ENCODE measurements at regions of chr6 and their contacts with region 1.

Region 1: DNA sequence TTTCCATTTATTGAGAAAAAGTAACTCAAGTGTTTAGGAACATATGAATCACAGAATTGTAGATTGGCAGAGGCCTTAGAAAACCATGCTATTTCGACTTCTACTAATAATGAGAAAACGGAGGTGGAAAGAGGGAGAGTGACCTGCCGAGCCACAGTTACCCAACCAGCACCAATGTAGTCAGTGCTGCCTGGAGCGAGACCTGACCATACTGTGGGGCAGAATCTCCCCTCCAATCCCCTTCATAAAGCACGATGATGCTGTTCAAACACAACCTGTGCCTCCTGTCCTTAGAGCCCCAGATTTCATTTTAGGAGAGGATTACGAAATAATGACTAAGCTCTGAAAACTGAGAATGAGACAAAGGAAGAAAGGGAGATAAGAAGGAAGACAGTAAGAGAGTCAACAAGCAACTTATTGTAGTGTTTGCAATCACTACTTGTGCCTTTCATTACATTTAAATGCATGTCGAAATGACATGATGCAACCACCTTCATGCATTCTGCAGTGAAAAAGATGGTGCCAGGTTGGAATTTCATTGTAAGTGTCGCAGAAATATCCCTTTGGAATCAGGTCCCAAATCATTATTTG is 70.6 kb downstream of the ATXN1 start:
- DNase-seq: no peak
- H3K4me3 Mint-ChIP-seq: peak overlapping the region; percentile 70
- H3K27ac Mint-ChIP-seq: peak overlapping the region; percentile 98
- H3K4me1 Mint-ChIP-seq: peaks cover 90% of the 10 kb centered on the region
- H3K27me3 Mint-ChIP-seq: no peaks in the 10 kb centered on the region

Region 2: GRCh38 chr6:16481697-16482399 is 208.9 kb before region 1 on chr6:
- intact Hi-C with region 1: loop called (anchors 2 kb)
- DNase-seq: peak; percentile 74
- H3K4me3 Mint-ChIP-seq: peak overlapping the region; percentile 56
- H3K27ac Mint-ChIP-seq: peak overlapping the region; percentile 97
- H3K4me1 Mint-ChIP-seq: peaks cover 89% of the 10 kb centered on the region
- H3K27me3 Mint-ChIP-seq: no peaks in the 10 kb centered on the region

Region 3: DNA sequence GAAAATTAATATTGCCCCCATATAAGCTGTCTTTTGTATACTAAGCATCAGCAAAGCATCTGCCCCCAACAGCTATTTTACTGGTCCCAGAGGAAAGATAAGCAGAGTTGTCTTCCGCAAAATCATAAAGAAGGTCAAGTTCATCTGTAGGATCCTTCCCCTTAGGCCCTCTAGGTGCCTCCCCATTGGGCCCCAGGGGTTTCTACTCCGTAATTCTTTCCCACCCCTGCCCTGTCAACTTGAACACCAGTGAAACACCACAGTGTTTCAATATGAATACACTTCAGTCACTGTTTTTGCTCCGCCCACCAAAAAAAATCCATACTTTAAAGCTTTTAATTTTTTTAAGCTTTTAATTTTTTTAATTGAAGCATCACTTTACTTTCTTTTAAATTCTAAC is 88.7 kb before region 1 on chr6:
- intact Hi-C with region 1: loop called (anchors 1 kb)
- DNase-seq: no peak
- H3K4me3 Mint-ChIP-seq: peak overlapping the region; percentile 28
- H3K27ac Mint-ChIP-seq: peak overlapping the region; percentile 75
- H3K4me1 Mint-ChIP-seq: peaks cover 49% of the 10 kb centered on the region
- H3K27me3 Mint-ChIP-seq: no peaks in the 10 kb centered on the region

Region 4: DNA sequence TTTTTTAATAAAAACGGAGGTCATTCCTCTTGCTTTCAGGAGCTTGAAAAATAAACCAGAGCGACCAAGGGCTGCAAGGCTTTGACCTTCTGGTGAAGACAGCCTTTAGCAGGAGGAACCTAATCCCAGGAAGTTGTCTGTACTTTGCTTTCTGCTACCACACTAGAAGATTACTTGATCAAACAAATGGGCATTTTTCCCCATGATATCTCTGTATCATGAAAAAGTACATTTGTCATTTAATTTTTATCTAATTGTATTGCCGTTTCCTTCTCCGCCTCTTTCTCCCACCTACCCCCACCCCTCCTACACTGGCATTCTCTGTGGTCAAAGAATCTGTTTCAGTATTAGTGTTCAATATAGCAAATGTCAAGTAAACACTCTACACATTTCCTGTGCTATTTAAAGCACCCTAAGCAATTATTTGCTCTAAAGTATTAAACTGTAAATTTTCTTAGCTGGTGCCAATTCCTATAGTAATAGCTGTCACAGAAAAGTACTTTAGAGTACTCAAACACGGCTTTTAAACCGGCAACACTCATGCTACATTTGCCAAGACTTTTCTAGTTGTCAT is 40.9 kb after region 1 on chr6:
- intact Hi-C with region 1: loop called (anchors 1 kb)
- DNase-seq: peak; percentile 36
- H3K4me3 Mint-ChIP-seq: peak overlapping the region; percentile 51
- H3K27ac Mint-ChIP-seq: peak overlapping the region; percentile 89
- H3K4me1 Mint-ChIP-seq: peaks cover 71% of the 10 kb centered on the region
- H3K27me3 Mint-ChIP-seq: no peaks in the 10 kb centered on the region

Measured in activated T-helper 1 cell treated with anti-CD3 and anti-CD28 coated beads, Interleukin-12 subunit alpha, Interleukin-12 subunit beta, Interleukin-2, Interleukin-4 antibody, amounts not matched to agents 30 ng/mL and 10 ng/mL and 1 ng/mL, durations not matched to agents 14 hours and 24 hours and 36 hours (primary cell).